ENCODE measurements at regions of chr2 and their contacts with region 1.

Region 1: GRCh38 chr2:150698016-150698661 is 210.7 kb upstream of the RND3 start:
- DNase-seq: no peak
- ATAC-seq: peak in 1 of 2 donors; percentile 57

Region 2: GRCh38 chr2:150570712-150571111 is 127.4 kb before region 1 on chr2:
- intact Hi-C with region 1: no loop called
- DNase-seq: no peak
- ATAC-seq: no peak

Region 3: DNA sequence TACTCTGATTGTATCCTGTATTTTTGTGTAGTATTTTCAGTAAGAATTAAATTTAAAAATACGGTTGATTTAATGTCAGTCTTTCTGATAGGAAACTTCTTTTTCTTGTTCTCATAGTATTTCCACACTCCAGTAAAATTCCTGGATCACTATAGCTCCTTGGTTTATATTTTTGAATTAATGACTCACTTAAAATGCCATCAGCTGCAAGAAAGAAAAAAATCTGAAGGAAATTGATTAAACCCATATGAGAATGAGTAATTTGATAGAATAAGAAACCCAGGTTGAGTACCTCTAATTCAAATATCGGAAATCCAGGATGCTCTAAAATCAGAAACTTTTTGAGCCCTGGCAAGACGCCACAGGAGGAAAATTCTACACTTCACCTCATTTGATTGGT is 23.9 kb before region 1 on chr2:
- intact Hi-C with region 1: loop called in 1 of 2 experiments (anchors 2 kb)
- DNase-seq: no peak
- ATAC-seq: no peak

Region 4: GRCh38 chr2:151792589-151792988 is 1094.5 kb after region 1 on chr2:
- intact Hi-C with region 1: no loop called
- DNase-seq: no peak
- ATAC-seq: no peak

Measured in left cardiac atrium (tissue), 4 donors.